Activated CD4-positive, alpha-beta T cell treated with anti-CD3 and anti-CD28 coated beads for 36 hours (primary cell): ENCODE measurements at regions of chr12 and their contacts with region 1.

Region 1: DNA sequence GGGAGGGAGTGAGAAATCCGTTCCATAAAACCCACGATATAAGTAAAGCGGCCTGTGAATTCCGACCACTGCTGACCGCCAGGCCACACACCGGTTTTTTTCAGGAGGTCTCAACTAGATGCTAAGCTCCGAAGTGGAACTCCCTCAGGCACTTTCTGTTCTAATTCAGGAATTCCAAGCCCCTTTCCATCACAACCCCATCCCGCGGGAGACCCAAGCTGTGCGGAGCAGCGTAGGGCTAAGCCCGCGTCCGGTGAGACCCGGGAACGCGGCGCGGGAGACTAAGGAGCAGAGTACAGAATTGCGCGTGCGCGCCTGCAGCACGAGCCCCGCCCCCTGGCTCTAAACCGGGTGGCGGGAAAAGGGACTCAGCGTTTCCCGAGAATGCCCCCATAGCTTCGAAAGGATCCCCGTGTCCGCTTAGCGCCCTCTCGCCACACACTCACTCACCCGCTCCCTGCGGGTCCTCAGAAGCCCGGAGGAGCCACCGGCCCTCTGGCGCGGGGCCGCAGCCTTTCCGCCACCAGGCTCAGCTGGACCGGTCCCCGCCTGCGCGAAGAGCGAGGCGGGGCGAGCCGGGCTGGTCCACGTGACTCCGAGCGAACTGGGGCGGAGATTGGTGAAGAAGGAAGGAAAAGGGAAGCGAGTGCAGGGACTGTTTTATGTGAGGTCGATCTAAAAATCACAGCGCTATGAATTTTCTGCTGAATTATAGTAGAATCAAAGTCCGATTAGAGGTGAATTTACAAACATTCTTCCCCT is at the start of gene TIMELESS:
- DNase-seq: peak; percentile 92
- ATAC-seq: peak; percentile 97
- H3K4me3 Mint-ChIP-seq: peak within 1 kb of the TSS; percentile 81
- H3K27ac Mint-ChIP-seq: peak within 1 kb of the TSS; percentile 97
- H3K4me1 Mint-ChIP-seq: peaks cover 19% of the 10 kb centered on the region
- H3K27me3 Mint-ChIP-seq: no peaks in the 10 kb centered on the region
- total RNA-seq, gene TIMELESS: 46.3 to 47.3 TPM

Region 2: DNA sequence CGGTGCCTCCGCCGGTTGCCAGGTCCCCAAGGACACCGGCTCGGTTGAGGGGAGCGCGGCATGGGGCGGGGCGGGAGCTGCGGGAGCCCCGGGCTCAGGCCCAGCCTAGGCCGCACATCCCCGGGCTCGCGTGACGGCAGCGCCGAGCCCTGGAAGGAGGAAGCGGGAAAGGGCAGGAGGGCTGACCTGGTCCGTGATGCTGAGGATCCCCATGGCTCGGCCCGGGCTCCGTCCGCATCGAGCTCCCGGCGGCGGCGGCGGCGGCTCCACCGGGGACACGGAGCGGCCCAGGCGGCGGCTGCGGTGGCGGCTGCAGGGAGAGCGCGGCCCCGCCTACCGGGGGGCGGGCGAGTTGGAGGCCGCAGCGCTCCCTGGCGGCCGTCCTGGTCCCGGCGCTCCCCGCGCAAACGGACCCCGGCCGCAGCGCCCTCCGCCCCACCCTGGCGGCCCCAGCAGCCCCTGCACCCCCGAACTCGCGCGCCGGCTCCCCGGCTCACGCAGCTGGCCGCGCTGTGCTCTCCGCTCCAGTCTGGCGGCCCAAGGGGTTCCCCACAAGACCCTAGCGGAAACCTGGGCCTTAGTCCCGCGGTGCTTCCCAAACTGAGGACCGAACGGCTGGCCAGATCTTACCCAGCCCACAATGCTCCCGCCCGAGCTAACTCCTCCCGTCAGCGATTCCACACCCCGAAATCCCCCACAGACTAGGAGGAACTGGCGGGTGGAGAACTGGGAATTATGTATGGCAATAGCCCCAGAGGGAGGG is 190.8 kb before region 1 on chr12 and contains the start of gene ANKRD52:
- CTCF ChIA-PET with region 1: interaction called, 3 read pairs
- POLR2A ChIA-PET with region 1: interaction called, 4 read pairs
- intact Hi-C with region 1: loop called in 1 of 2 experiments (anchors 5 kb)
- DNase-seq: peak; percentile 90
- ATAC-seq: peak; percentile 92
- H3K4me3 Mint-ChIP-seq: peak within 1 kb of the TSS; percentile 83
- H3K27ac Mint-ChIP-seq: peak within 1 kb of the TSS; percentile 72
- H3K4me1 Mint-ChIP-seq: peaks cover 16% of the 10 kb centered on the region
- H3K27me3 Mint-ChIP-seq: no peaks in the 10 kb centered on the region
- total RNA-seq, gene ANKRD52: 29.2 to 31.0 TPM

Region 3: GRCh38 chr12:56299853-56300643 is 149.0 kb before region 1 on chr12 and contains the start of gene CS:
- CTCF ChIA-PET with region 1: no interaction called
- POLR2A ChIA-PET with region 1: interaction called, 7 read pairs
- intact Hi-C with region 1: loop called in 1 of 2 experiments (anchors 1 kb)
- DNase-seq: peak; percentile 99
- ATAC-seq: peak; percentile 98
- H3K4me3 Mint-ChIP-seq: peak within 1 kb of the TSS; percentile 96
- H3K27ac Mint-ChIP-seq: peak within 1 kb of the TSS; percentile 91
- H3K4me1 Mint-ChIP-seq: peaks cover 49% of the 10 kb centered on the region
- H3K27me3 Mint-ChIP-seq: no peaks in the 10 kb centered on the region
- total RNA-seq, gene CS: 197 to 293 TPM

Region 4: DNA sequence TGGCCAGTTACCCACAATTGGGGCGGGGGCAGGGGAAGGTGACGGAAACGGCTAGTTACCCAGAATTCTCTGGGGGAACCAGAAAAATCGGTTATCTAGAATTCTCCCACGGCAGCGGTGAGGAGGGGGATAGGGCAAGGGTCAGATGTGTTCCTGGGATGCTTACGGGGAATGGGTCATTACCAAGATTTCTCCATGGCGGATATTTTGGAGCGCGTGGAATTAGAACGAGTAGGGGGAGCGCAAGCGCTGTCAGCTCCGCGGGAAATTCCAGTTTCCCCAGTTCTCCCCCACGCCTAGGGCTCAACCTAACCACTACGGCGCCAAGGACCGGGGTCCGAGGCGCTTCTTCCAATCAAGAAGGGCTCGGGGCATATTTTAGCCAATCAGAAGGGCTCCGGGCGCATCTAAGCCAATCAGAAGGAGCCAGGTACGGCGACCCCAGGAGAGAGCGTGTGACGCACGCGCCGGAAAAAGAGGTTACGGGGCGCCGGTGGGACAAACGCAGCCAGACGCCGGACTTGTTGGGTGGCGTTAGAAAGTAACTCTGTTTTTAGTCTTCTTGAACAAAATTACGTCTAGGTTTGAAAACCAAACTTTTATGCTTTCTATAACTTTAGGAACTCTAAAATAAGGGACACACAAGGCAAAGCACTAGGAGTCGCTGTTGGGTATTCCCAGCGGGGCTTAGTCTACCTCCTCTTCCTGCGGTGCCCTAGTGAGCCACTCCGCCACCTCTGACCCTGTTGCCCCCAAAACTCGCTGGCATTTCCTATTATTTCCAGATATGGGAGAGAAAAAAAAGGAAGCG is 115.2 kb before region 1 on chr12 and contains the start of gene PAN2:
- CTCF ChIA-PET with region 1: no interaction called
- POLR2A ChIA-PET with region 1: no interaction called
- intact Hi-C with region 1: loop called in 1 of 2 experiments (anchors 1 kb)
- DNase-seq: peak; percentile 96
- ATAC-seq: peak; percentile 88
- H3K4me3 Mint-ChIP-seq: peak within 1 kb of the TSS; percentile 83
- H3K27ac Mint-ChIP-seq: peak within 1 kb of the TSS; percentile 99
- H3K4me1 Mint-ChIP-seq: peaks cover 37% of the 10 kb centered on the region
- H3K27me3 Mint-ChIP-seq: no peaks in the 10 kb centered on the region
- total RNA-seq, gene PAN2: 54.6 to 62.5 TPM

Region 5: GRCh38 chr12:56477521-56478225 is 28.6 kb after region 1 on chr12:
- CTCF ChIA-PET with region 1: no interaction called
- POLR2A ChIA-PET with region 1: no interaction called
- intact Hi-C with region 1: no loop called
- DNase-seq: no peak
- ATAC-seq: no peak
- H3K4me3 Mint-ChIP-seq: no peak overlapping the region
- H3K27ac Mint-ChIP-seq: no peak overlapping the region
- H3K4me1 Mint-ChIP-seq: peaks cover 10% of the 10 kb centered on the region
- H3K27me3 Mint-ChIP-seq: no peaks in the 10 kb centered on the region

Region 6: DNA sequence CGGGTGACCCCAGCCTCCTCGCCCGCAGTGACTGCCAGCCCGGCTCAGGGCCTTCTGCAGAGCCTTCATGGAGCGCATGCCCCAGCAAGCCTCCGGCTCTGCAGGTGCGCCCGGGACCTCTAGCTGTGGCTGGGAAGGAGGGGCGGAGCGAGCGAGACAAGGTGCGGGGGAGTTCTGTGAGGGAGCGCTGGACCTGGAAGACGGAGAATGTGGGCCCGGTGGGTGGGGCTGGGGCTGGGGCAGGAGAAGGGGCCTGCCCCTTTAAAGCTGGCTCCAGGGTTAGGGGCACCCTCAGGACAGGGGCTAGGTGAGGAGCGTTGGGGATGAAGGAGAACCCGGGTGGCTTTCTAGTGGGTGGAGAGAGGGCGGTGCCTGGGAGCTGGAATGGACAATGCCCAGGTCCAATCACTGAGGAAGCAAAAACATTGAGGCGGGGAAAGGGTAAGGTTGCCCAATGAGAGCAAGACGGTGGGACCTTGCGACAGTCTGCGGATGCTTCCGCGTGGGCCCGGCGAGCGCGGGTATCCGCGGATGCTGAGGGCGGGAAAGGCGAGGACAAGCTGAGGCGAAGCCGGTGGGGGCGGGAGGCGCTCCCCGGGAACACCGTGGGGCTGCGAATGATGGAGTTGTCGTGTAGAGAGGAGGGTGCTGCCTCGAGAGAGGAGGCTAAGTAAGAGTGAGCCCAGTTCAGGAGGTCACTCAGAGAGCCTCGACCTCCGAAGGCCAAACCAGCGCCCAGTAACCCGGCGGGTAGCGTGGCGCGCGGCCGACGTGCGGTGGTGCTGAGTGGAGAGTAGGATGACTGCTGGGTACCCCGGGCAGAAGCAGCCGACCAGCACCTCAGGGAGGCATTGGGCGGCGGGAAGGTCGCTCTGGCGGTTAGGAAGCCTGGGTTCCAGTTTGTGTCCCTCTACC is 39.3 kb after region 1 on chr12 and contains the start of gene GLS2:
- CTCF ChIA-PET with region 1: no interaction called
- POLR2A ChIA-PET with region 1: no interaction called
- intact Hi-C with region 1: loop called in 1 of 2 experiments (anchors 1 kb)
- DNase-seq: peak; percentile 85
- ATAC-seq: peak; percentile 97
- H3K4me3 Mint-ChIP-seq: peak within 1 kb of the TSS; percentile 74
- H3K27ac Mint-ChIP-seq: peak within 1 kb of the TSS; percentile 73
- H3K4me1 Mint-ChIP-seq: peaks cover 16% of the 10 kb centered on the region
- H3K27me3 Mint-ChIP-seq: peaks cover 34% of the 10 kb centered on the region
- total RNA-seq, gene GLS2: 8.7 TPM

Region 7: GRCh38 chr12:56521590-56522371 is 72.7 kb after region 1 on chr12 and contains the start of gene RBMS2:
- CTCF ChIA-PET with region 1: no interaction called
- POLR2A ChIA-PET with region 1: no interaction called
- intact Hi-C with region 1: no loop called
- DNase-seq: peak; percentile 66
- ATAC-seq: peak; percentile 90
- H3K4me3 Mint-ChIP-seq: peak within 1 kb of the TSS; percentile 75
- H3K27ac Mint-ChIP-seq: peak within 1 kb of the TSS; percentile 79
- H3K4me1 Mint-ChIP-seq: peaks cover 29% of the 10 kb centered on the region
- H3K27me3 Mint-ChIP-seq: no peaks in the 10 kb centered on the region
- total RNA-seq, gene RBMS2: 5.0 to 7.0 TPM

Region 8: GRCh38 chr12:56546680-56547079 is 97.6 kb after region 1 on chr12:
- CTCF ChIA-PET with region 1: no interaction called
- POLR2A ChIA-PET with region 1: no interaction called
- intact Hi-C with region 1: no loop called
- DNase-seq: no peak
- ATAC-seq: no peak
- H3K4me3 Mint-ChIP-seq: no peak overlapping the region
- H3K27ac Mint-ChIP-seq: no peak overlapping the region
- H3K4me1 Mint-ChIP-seq: no peaks in the 10 kb centered on the region
- H3K27me3 Mint-ChIP-seq: no peaks in the 10 kb centered on the region

Region 9: GRCh38 chr12:56684745-56685359 is 235.8 kb after region 1 on chr12:
- CTCF ChIA-PET with region 1: no interaction called
- POLR2A ChIA-PET with region 1: no interaction called
- intact Hi-C with region 1: no loop called
- DNase-seq: no peak
- ATAC-seq: no peak
- H3K4me3 Mint-ChIP-seq: peak overlapping the region; percentile 99
- H3K27ac Mint-ChIP-seq: peak overlapping the region; percentile 100
- H3K4me1 Mint-ChIP-seq: peaks cover 37% of the 10 kb centered on the region
- H3K27me3 Mint-ChIP-seq: no peaks in the 10 kb centered on the region